HAP-1 (cell line): ENCODE measurements at regions of chr5 and their contacts with region 1.

Region 1: GRCh38 chr5:16666883-16667398 is 50.1 kb upstream of the RETREG1 start:
- DNase-seq: no peak
- H3K4me3 ChIP-seq: no peak overlapping the region
- H3K4me1 ChIP-seq: no peaks in the 10 kb centered on the region
- H3K27me3 ChIP-seq: no peaks in the 10 kb centered on the region

Region 2: DNA sequence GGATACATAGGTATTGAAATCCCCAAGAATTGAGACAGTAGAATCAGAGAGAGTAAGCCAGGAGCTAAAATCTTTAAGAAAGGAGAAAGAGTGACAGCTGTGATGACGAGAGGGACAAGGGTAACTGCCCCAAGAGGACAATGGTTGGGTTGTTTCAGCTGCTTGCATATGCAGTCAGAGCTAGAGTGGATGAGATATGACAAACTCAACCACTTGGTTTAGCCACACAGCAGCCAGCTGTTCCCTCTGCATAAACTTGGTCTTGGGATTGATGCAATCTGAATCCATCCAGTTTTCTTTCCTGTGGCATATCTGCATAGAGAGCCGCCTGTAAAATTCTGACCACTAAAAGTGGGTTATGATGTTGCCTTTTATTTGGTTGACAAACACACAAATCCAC is 302.0 kb before region 1 on chr5:
- in situ Hi-C with region 1: no loop called
- DNase-seq: no peak
- H3K4me3 ChIP-seq: no peak overlapping the region
- H3K4me1 ChIP-seq: no peaks in the 10 kb centered on the region
- H3K27me3 ChIP-seq: peaks cover 6% of the 10 kb centered on the region; the same call in 1 of the 2 replicates

Region 3: DNA sequence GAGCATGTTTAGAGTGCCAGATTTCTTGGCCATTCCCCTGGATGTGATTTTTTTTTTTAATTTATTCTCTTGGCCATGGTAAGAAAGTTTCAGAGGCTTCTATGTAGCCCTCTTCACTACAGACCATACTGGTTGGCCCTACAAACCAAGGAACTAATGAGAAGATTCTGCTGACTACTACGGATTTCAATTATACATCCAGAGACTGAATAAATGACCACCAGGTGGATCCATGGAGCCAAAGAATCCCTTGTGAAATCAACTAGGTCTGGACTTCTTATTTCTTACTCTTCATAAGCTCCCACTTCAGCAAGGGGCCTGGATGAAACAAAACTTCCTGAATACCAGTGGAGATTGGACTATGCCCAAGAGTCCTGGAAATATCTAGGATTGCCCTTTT is 229.0 kb before region 1 on chr5:
- in situ Hi-C with region 1: no loop called
- DNase-seq: no peak
- H3K4me3 ChIP-seq: no peak overlapping the region
- H3K4me1 ChIP-seq: no peaks in the 10 kb centered on the region
- H3K27me3 ChIP-seq: peaks cover 4% of the 10 kb centered on the region; the same call in 1 of the 2 replicates

Region 4: GRCh38 chr5:16489322-16489791 is 177.6 kb before region 1 on chr5:
- in situ Hi-C with region 1: loop called (anchors 25 kb)
- DNase-seq: peak in 1 of 2 experiments; percentile 52
- H3K4me3 ChIP-seq: no peak overlapping the region
- H3K4me1 ChIP-seq: no peaks in the 10 kb centered on the region
- H3K27me3 ChIP-seq: no peaks in the 10 kb centered on the region

Region 5: GRCh38 chr5:17238521-17239041 is 571.6 kb after region 1 on chr5:
- in situ Hi-C with region 1: no loop called
- DNase-seq: no peak
- H3K4me3 ChIP-seq: no peak overlapping the region
- H3K4me1 ChIP-seq: peaks cover 12% of the 10 kb centered on the region
- H3K27me3 ChIP-seq: no peaks in the 10 kb centered on the region